Activated CD4-positive, alpha-beta T cell treated with anti-CD3 and anti-CD28 coated beads for 36 hours (primary cell): ENCODE measurements at regions of chr14 and their contacts with region 1.

Region 1: GRCh38 chr14:23469127-23469905 is at the start of gene NGDN:
- DNase-seq: peak; percentile 95
- ATAC-seq: peak; percentile 97
- H3K4me3 Mint-ChIP-seq: no peak within 1 kb of the TSS
- H3K27ac Mint-ChIP-seq: no peak within 1 kb of the TSS
- H3K4me1 Mint-ChIP-seq: peaks cover 11% of the 10 kb centered on the region
- H3K27me3 Mint-ChIP-seq: no peaks in the 10 kb centered on the region
- total RNA-seq, gene NGDN: 53.0 to 57.8 TPM

Region 2: GRCh38 chr14:22766456-22767322 is 702.6 kb before region 1 on chr14 and contains the start of gene OXA1L:
- CTCF ChIA-PET with region 1: no interaction called
- POLR2A ChIA-PET with region 1: no interaction called
- intact Hi-C with region 1: loop called in 1 of 2 experiments (anchors 2 kb)
- DNase-seq: peak; percentile 98
- ATAC-seq: peak; percentile 87
- H3K4me3 Mint-ChIP-seq: peak within 1 kb of the TSS; percentile 90
- H3K27ac Mint-ChIP-seq: peak within 1 kb of the TSS; percentile 99
- H3K4me1 Mint-ChIP-seq: peaks cover 32% of the 10 kb centered on the region
- H3K27me3 Mint-ChIP-seq: no peaks in the 10 kb centered on the region
- total RNA-seq, gene OXA1L: 136 to 148 TPM

Region 3: DNA sequence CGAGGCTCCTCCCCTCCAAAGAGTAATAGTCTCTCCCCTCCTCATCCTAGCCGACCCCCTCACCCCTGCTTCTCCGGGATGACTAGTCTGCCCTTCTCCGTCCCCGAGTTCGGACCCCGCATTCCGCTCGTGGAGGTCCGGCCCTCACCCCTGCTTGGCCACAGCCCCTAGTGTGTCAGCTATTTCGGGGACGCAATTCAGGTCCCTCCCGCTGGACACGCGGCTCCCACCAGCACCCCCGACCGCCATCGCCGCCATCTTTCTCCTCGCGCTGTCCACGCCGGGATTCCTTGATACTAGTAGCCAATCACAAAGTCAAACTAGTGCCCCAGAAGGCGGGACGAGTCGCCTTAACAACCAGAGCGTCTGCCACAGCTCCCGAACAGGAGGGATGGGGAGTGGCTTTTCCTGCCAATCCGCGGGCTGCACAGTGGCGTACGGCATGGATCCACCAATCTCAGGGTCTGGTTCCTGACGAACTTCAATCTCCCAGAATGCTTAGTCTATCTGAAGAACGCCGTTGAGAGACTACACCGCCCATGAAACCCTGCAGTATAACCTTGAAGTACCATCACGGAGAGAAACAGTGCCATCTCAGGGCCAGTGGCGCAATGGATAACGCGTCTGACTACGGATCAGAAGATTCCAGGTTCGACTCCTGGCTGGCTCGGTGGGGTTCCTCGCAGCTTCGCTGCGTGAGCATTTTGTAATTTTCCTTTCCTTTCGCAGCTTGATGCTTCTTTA is 540.0 kb before region 1 on chr14 and contains the start of gene PRMT5:
- CTCF ChIA-PET with region 1: no interaction called
- POLR2A ChIA-PET with region 1: no interaction called
- intact Hi-C with region 1: loop called in 1 of 2 experiments (anchors 1 kb)
- DNase-seq: peak; percentile 99
- ATAC-seq: peak; percentile 98
- H3K4me3 Mint-ChIP-seq: no peak within 1 kb of the TSS
- H3K27ac Mint-ChIP-seq: no peak within 1 kb of the TSS
- H3K4me1 Mint-ChIP-seq: peaks cover 39% of the 10 kb centered on the region
- H3K27me3 Mint-ChIP-seq: no peaks in the 10 kb centered on the region
- total RNA-seq, gene PRMT5: 121 to 151 TPM

Region 4: GRCh38 chr14:23436327-23437132 is 32.8 kb before region 1 on chr14:
- CTCF ChIA-PET with region 1: no interaction called
- POLR2A ChIA-PET with region 1: no interaction called
- intact Hi-C with region 1: no loop called
- DNase-seq: no peak
- ATAC-seq: no peak
- H3K4me3 Mint-ChIP-seq: no peak overlapping the region
- H3K27ac Mint-ChIP-seq: no peak overlapping the region
- H3K4me1 Mint-ChIP-seq: peaks cover 2% of the 10 kb centered on the region
- H3K27me3 Mint-ChIP-seq: no peaks in the 10 kb centered on the region

Region 5: GRCh38 chr14:23567192-23568020 is 98.1 kb after region 1 on chr14 and contains the start of gene AP1G2:
- CTCF ChIA-PET with region 1: no interaction called
- POLR2A ChIA-PET with region 1: no interaction called
- intact Hi-C with region 1: loop called in 1 of 2 experiments (anchors 1 kb)
- DNase-seq: peak; percentile 95
- ATAC-seq: peak; percentile 96
- H3K4me3 Mint-ChIP-seq: peak within 1 kb of the TSS; percentile 92
- H3K27ac Mint-ChIP-seq: peak within 1 kb of the TSS; percentile 95
- H3K4me1 Mint-ChIP-seq: peaks cover 23% of the 10 kb centered on the region
- H3K27me3 Mint-ChIP-seq: peaks cover 5% of the 10 kb centered on the region
- total RNA-seq, gene AP1G2: 162 to 166 TPM

Region 6: DNA sequence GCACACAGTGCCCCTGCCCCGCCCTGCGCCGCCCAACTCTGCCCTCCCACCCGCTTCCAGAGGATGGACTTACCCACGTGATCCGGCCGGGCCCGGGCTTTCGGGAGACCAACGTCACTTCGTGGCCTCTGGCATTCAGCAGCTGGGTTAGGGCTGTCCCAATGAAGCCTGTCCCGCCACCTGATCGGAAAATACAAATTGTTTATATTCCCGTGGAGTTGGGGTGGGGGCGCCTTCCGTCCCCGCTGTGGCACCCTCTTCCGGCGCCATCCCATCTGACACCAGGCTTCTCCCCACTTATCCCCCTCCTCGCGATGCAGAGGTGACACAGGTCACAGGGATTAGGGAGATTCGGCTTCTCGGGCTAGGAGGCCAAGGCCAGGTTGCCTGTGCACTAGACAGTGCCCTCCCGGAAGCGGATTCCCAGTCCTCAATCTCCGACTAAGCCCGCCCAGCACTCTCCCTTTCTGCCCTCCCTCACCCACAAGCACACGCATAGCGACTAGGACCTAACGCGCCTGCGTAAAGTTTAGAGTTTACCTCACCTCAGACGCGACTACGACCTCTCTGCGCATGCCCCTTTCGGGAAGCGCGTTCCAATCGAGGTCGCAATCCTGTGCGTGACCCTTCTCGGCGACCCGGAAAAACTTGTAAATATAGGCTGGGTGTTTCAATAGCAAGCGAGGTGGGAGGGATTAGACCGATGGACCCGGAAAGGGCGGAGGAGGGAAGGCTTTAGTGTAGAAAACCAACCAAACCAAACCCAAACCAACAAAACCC is 973.1 kb after region 1 on chr14 and contains the start of gene SDR39U1:
- CTCF ChIA-PET with region 1: no interaction called
- POLR2A ChIA-PET with region 1: no interaction called
- intact Hi-C with region 1: loop called in 1 of 2 experiments (anchors 2 kb)
- DNase-seq: peak; percentile 98
- ATAC-seq: peak; percentile 92
- H3K4me3 Mint-ChIP-seq: peak within 1 kb of the TSS; percentile 97
- H3K27ac Mint-ChIP-seq: peak within 1 kb of the TSS; percentile 99
- H3K4me1 Mint-ChIP-seq: peaks cover 41% of the 10 kb centered on the region
- H3K27me3 Mint-ChIP-seq: no peaks in the 10 kb centered on the region
- total RNA-seq, gene SDR39U1: 40.9 to 47.8 TPM